ENCODE measurements at regions of chr12 and their contacts with region 1.

Region 1: GRCh38 chr12:65123435-65124063 is 2.4 kb upstream of the WIF1 start:
- DNase-seq: no peak
- ATAC-seq: no peak
- H3K4me3 ChIP-seq: no peak overlapping the region
- H3K27ac ChIP-seq: no peak overlapping the region
- H3K4me1 ChIP-seq: no peaks in the 10 kb centered on the region
- H3K27me3 ChIP-seq: peaks cover 53% of the 10 kb centered on the region
- CTCF ChIP-seq: peak; percentile 81; the same call in 1 of the 2 replicates

Region 2: DNA sequence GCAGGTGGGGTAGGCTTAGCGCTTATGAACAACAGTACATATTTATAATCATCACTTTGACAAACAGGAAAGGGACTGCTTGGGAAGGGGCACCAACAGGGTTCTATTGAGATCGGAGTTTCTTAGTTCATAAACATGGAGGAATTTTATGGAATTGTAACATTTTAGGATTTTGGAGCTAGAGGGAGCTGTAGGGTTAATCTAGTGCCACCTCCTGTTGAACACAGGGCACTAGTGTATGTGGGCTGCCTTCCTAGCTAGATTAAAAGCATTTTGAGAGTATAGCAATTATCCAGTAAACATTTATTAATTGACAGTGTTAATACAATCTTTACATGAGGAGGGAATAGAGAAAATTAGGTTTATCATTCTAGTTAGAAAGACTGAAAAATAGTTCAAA is 322.2 kb before region 1 on chr12:
- CTCF ChIA-PET with region 1: interaction called, 3 read pairs
- POLR2A ChIA-PET with region 1: no interaction called
- in situ Hi-C with region 1: no loop called
- intact Hi-C with region 1: loop called (anchors 1 kb)
- DNase-seq: no peak
- ATAC-seq: 0 out of 2 replicates have a peak, but pooled peaks have one; percentile 72
- H3K4me3 ChIP-seq: no peak overlapping the region
- H3K27ac ChIP-seq: no peak overlapping the region
- H3K4me1 ChIP-seq: peaks cover 12% of the 10 kb centered on the region; the same call in 1 of the 2 replicates
- H3K27me3 ChIP-seq: no peaks in the 10 kb centered on the region
- CTCF ChIP-seq: 0 out of 2 replicates have a peak, but pooled peaks have one; percentile 0

Region 3: DNA sequence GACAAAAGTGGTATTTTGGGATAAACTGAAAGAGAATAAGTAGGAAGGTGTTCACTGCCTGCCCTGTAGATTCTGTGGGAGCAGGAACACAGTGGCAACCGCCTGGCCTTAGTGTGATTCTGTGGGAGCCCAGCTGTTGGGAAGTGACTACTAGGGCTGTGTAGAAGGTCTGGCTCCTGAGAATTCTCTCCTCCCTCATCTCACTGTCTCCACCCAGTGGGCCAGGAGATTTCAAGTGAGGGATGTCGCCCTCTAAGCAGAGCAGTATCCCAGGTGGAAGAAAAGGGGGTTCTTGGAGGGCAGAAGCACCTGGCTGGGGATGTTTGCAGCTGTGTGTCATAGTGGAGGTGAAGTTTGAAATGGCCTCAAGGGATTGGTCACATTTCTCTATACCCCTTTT is 185.4 kb before region 1 on chr12:
- CTCF ChIA-PET with region 1: no interaction called
- POLR2A ChIA-PET with region 1: no interaction called
- in situ Hi-C with region 1: no loop called
- intact Hi-C with region 1: no loop called
- DNase-seq: no peak
- ATAC-seq: no peak
- H3K4me3 ChIP-seq: no peak overlapping the region
- H3K27ac ChIP-seq: no peak overlapping the region
- H3K4me1 ChIP-seq: no peaks in the 10 kb centered on the region; the same call in 1 of the 2 replicates
- H3K27me3 ChIP-seq: peaks cover 3% of the 10 kb centered on the region; the same call in 1 of the 2 replicates
- CTCF ChIP-seq: no peak

Measured in Panc1 (cell line).